ENCODE measurements at regions of chr3 and their contacts with region 1.

Region 1: DNA sequence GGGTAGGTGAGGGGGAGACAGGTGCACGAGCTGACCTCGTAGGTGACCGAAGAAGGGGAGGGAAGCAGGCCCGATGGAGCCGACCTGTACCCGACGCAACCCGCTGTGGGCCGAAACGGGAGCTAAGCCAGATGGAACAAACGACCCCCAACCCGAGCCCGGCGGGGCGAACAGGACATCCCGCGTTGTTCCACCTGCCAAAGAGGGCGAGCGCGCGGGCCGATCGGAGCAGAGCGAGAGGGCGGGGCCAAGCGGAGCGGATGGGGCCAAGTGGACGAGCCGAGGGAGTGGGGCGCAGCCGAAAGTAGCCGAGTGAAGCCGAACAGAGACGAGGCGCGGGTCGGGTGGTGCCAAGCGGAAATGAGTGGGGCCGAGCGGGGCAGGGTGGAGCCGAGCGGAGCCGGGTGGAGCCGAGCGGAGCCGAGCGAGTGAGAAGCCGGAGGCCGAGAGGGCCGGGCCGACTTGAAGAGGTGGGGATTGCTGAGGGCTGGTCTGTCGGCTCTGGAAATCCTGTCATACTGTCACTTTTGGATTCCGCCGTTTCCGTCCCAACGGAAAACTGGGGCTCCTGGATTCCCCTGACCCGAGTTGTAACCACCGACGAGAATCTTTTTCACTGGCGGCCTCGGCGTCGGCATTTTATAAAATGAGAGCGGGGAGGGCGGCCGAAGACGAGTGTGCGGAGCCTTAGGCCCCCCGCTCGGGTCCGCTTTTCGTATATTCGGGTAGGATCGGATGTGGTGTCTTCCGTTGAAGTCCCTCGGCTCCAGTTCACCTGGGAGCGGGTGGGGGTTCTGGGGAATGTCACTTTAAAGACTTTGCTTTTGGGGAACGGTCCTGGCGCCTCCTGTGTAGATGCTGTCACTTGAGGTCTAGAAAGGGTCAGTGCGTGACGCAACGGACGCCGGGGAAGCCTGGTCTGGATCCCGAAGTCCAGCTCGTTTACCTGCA is 15.6 kb upstream of the WNT7A start:
- DNase-seq: peak; percentile 75 to 96 (median 91)
- H3K4me3 ChIP-seq: peak overlapping the region; percentile 40 to 90 (median 75)
- H3K27ac ChIP-seq: peak overlapping the region in 46 of 59 donors; percentile 9 to 85 (median 46)
- H3K27me3 ChIP-seq: no peaks in the 10 kb centered on the region
- CTCF ChIP-seq: peak in 17 of 56 donors; percentile 8 to 54 (median 21)

Region 2: GRCh38 chr3:14178247-14179113 is 283.1 kb after region 1 on chr3 and contains the starts of genes LSM3 and XPC:
- intact Hi-C with region 1: loop called in 1 of 2 experiments (anchors 1 kb)
- DNase-seq: peak; percentile 96 to 99 (median 98)
- H3K4me3 ChIP-seq: peak within 1 kb of the TSS; percentile 53 to 99 (median 90)
- H3K27ac ChIP-seq: peak within 1 kb of the TSS; percentile 43 to 98 (median 92)
- H3K27me3 ChIP-seq: no peaks in the 10 kb centered on the region
- CTCF ChIP-seq: peak in 14 of 56 donors; percentile 2 to 53 (median 22)
- total RNA-seq, gene LSM3: 4.4 to 10.8 (median 7.8) TPM
- total RNA-seq, gene XPC: 19.9 to 57.4 (median 32.1) TPM

Measured in dorsolateral prefrontal cortex (tissue), 120 donors.